ENCODE measurements at regions of chr4 and their contacts with region 1.

Region 1: GRCh38 chr4:138870737-138871554 is 144.6 kb upstream of the NOCT start:
- DNase-seq: peak in 1 of 2 donors; percentile 58
- ATAC-seq: peak in 7 of 8 donors; percentile 64 to 76 (median 69)
- H3K4me3 ChIP-seq: no peak overlapping the region
- H3K27ac ChIP-seq: no peak overlapping the region
- H3K4me1 ChIP-seq: peaks cover 0 to 7% (median 0%) of the 10 kb centered on the region in 9 donors
- H3K27me3 ChIP-seq: peaks cover 0 to 22% (median 8%) of the 10 kb centered on the region in 7 donors
- CTCF ChIP-seq: peak; percentile 66 to 88 (median 87)

Region 2: DNA sequence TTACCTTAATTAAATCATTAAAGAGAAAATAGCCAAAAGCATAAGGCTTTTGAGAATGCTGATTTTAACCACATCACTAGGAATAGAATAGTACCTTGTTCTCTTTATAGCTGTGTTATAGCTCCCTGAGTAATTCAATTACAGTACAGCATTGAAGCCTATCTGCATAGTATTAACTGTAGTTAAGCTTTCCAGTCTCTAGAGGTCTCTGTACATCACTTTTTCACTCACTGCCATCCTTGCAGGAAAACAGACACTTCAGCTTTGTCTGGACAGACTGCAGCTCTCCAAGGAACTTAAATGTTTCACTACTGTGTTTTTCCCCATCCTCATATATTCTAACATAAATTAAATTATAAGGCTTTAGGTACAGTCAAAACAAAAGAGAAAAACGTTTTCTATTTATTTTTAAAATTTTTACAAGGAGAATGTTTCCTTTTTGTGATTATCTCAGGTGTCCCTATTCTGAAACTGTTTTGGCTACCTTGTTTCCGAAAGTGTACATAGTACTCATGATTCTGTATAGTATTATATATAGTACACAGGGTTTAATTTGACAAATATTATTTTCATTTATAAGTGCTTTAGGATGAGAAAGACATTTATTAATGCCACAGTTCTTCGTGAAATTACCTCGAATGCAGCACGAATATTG is 1746.5 kb before region 1 on chr4:
- intact Hi-C with region 1: loop called in 1 of 10 experiments (anchors 5 kb)
- DNase-seq: peak in 1 of 2 donors; percentile 5
- ATAC-seq: peak; percentile 78 to 97 (median 88)
- H3K4me3 ChIP-seq: peak overlapping the region; percentile 2 to 52 (median 30)
- H3K27ac ChIP-seq: peak overlapping the region in 1 of 10 donors; percentile 14
- H3K4me1 ChIP-seq: no peaks in the 10 kb centered on the region
- H3K27me3 ChIP-seq: no peaks in the 10 kb centered on the region
- CTCF ChIP-seq: peak in 8 of 9 donors; percentile 16 to 80 (median 64)

Region 3: DNA sequence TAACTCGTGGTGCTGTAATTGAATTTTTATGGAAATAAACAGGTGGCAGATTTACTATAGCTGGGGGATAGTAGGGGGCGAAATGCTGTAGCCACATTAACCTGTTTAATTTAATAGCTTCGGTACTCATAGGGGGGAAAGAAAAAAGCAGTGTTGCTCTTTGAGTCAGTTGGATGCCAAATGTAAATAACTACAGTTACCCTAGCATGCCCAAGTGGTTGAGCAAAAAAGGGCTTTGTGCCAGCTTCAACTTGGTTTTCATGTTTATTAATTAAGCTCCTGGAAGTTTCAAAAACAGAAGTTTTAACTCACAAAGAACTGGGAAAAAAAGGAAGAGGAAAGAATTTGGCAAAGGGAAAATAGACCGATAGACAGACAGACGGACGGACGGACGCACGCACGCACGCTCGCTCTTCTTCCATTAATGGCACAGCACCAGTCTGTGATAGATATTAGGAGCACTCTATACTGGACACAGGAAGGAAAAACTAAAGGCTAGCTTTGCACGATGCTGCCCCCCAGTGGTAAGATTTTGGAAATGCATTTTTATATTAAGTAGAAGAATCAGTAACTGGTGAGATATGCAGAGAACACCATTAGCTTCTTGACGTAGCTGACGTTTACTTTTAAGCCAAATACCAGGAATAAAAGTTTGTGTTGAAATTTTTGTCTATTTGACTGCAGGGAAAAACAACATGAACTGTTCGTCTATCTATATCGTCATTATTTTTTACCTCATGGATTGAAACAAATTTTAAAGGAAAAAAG is 780.6 kb before region 1 on chr4:
- intact Hi-C with region 1: loop called in 1 of 10 experiments (anchors 10 kb)
- DNase-seq: peak; percentile 14 to 61
- ATAC-seq: peak; percentile 65 to 85 (median 80)
- H3K4me3 ChIP-seq: peak overlapping the region in 4 of 10 donors; percentile 24 to 26 (median 25)
- H3K27ac ChIP-seq: no peak overlapping the region
- H3K4me1 ChIP-seq: peaks cover 0 to 8% (median 0%) of the 10 kb centered on the region in 9 donors
- H3K27me3 ChIP-seq: no peaks in the 10 kb centered on the region
- CTCF ChIP-seq: peak; percentile 73 to 85 (median 85)

Region 4: GRCh38 chr4:138686106-138686835 is 184.7 kb before region 1 on chr4:
- intact Hi-C with region 1: loop called in 8 of 10 experiments (anchors 2 to 10 kb)
- DNase-seq: peak; percentile 33 to 54
- ATAC-seq: peak in 6 of 8 donors; percentile 36 to 84 (median 64)
- H3K4me3 ChIP-seq: no peak overlapping the region
- H3K27ac ChIP-seq: peak overlapping the region in 3 of 10 donors; percentile 18 to 39 (median 20)
- H3K4me1 ChIP-seq: peaks cover 0 to 21% (median 1%) of the 10 kb centered on the region in 9 donors
- H3K27me3 ChIP-seq: peaks cover 0 to 10% (median 0%) of the 10 kb centered on the region in 7 donors
- CTCF ChIP-seq: peak in 1 of 9 donors; percentile 15

Region 5: GRCh38 chr4:138919094-138919936 is 48.4 kb after region 1 on chr4:
- intact Hi-C with region 1: loop called in 2 of 10 experiments (anchors 2 to 5 kb)
- DNase-seq: peak; percentile 60 to 76
- ATAC-seq: peak; percentile 42 to 95 (median 82)
- H3K4me3 ChIP-seq: peak overlapping the region in 2 of 10 donors; percentile 11 to 17
- H3K27ac ChIP-seq: no peak overlapping the region
- H3K4me1 ChIP-seq: peaks cover 0 to 11% (median 0%) of the 10 kb centered on the region in 9 donors
- H3K27me3 ChIP-seq: no peaks in the 10 kb centered on the region
- CTCF ChIP-seq: peak; percentile 52 to 85 (median 78)

Measured in heart right ventricle (tissue), 16 donors.